ENCODE measurements at regions of chr12 and their contacts with region 1.

Region 1: GRCh38 chr12:53190108-53190729 is 9.5 kb upstream of the CSAD start:
- DNase-seq: peak in 4 of 5 donors; percentile 60 to 69 (median 66)
- H3K4me3 ChIP-seq: no peak overlapping the region
- H3K27ac ChIP-seq: no peak overlapping the region
- H3K4me1 ChIP-seq: peaks cover 0 to 4% (median 0%) of the 10 kb centered on the region in 3 donors
- H3K27me3 ChIP-seq: no peaks in the 10 kb centered on the region
- CTCF ChIP-seq: peak; percentile 61

Region 2: GRCh38 chr12:53065975-53066931 is 124.0 kb before region 1 on chr12:
- intact Hi-C with region 1: loop called (anchors 10 kb)
- DNase-seq: peak; percentile 80 to 92 (median 86)
- H3K4me3 ChIP-seq: no peak overlapping the region
- H3K27ac ChIP-seq: peak overlapping the region; percentile 48 to 51
- H3K4me1 ChIP-seq: peaks cover 0 to 37% (median 5%) of the 10 kb centered on the region in 3 donors
- H3K27me3 ChIP-seq: no peaks in the 10 kb centered on the region
- CTCF ChIP-seq: peak; percentile 90

Measured in kidney (tissue), 22 donors.